ENCODE measurements at regions of chr2 and their contacts with region 1.

Region 1: GRCh38 chr2:134973241-134974138 is 54.9 kb downstream of the CCNT2 start:
- DNase-seq: no peak
- H3K4me3 Mint-ChIP-seq: no peak overlapping the region
- H3K27ac Mint-ChIP-seq: no peak overlapping the region
- H3K4me1 Mint-ChIP-seq: no peaks in the 10 kb centered on the region
- H3K27me3 Mint-ChIP-seq: no peaks in the 10 kb centered on the region
- CTCF ChIP-seq: no peak

Region 2: GRCh38 chr2:134527381-134527780 is 446.1 kb before region 1 on chr2:
- CTCF ChIA-PET with region 1: no interaction called
- intact Hi-C with region 1: no loop called
- DNase-seq: no peak
- H3K4me3 Mint-ChIP-seq: no peak overlapping the region
- H3K27ac Mint-ChIP-seq: no peak overlapping the region
- H3K4me1 Mint-ChIP-seq: no peaks in the 10 kb centered on the region
- H3K27me3 Mint-ChIP-seq: no peaks in the 10 kb centered on the region
- CTCF ChIP-seq: no peak

Region 3: DNA sequence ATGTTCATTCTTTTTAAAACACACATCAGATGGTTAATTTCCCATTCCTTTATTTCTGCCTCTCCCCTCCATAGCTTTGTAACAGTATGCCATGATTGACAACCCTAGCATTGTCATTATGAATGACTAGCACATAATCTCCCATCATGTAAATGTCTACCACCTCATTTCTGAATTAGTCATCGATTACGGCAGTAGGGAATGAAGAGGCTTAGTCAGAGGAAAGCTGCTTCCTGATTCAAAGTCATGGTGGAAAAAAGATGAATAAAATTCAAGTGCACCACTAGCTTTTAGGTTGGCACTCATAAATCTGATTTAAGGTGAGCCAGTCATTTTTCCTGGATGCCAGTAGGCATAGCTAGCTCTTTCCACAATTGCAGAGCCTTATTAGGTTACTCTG is 154.2 kb before region 1 on chr2:
- CTCF ChIA-PET with region 1: no interaction called
- intact Hi-C with region 1: no loop called
- DNase-seq: peak; percentile 20
- H3K4me3 Mint-ChIP-seq: no peak overlapping the region
- H3K27ac Mint-ChIP-seq: peak overlapping the region; percentile 91
- H3K4me1 Mint-ChIP-seq: peaks cover 23% of the 10 kb centered on the region
- H3K27me3 Mint-ChIP-seq: no peaks in the 10 kb centered on the region
- CTCF ChIP-seq: no peak

Region 4: DNA sequence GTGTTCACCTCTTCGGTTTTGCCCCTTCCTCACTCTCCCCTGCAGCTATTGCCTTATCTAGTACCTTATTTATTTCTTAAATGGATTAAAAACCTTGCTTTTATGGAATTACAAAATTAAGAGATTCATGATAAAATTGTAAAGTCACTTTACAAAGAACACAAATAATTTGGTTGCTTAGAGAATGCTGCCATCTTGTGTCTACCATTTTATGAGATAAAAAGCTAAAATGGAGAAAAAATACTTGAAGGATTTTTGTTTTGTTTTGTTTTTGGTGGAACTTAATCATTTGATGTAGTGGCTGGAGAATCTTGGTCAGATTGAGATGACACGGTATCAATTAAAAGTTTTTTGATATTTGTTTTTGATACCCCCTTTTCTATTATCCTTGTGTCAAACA is 627.4 kb after region 1 on chr2:
- CTCF ChIA-PET with region 1: interaction called, 11 read pairs
- intact Hi-C with region 1: no loop called
- DNase-seq: no peak
- H3K4me3 Mint-ChIP-seq: no peak overlapping the region
- H3K27ac Mint-ChIP-seq: no peak overlapping the region
- H3K4me1 Mint-ChIP-seq: no peaks in the 10 kb centered on the region
- H3K27me3 Mint-ChIP-seq: no peaks in the 10 kb centered on the region
- CTCF ChIP-seq: no peak

Measured in Calu3 (cell line).